ENCODE measurements at regions of chr18 and their contacts with region 1.

Region 1: GRCh38 chr18:35386600-35387351 is 9.6 kb upstream of the ZNF396 start:
- DNase-seq: peak; percentile 14 to 72
- ATAC-seq: peak; percentile 63 to 78 (median 74)
- H3K4me3 ChIP-seq: no peak overlapping the region
- H3K27ac ChIP-seq: no peak overlapping the region
- H3K4me1 ChIP-seq: peaks cover 0 to 10% (median 0%) of the 10 kb centered on the region in 9 donors
- H3K27me3 ChIP-seq: peaks cover 0 to 12% (median 0%) of the 10 kb centered on the region in 7 donors
- CTCF ChIP-seq: peak; percentile 83 to 96 (median 91)

Region 2: DNA sequence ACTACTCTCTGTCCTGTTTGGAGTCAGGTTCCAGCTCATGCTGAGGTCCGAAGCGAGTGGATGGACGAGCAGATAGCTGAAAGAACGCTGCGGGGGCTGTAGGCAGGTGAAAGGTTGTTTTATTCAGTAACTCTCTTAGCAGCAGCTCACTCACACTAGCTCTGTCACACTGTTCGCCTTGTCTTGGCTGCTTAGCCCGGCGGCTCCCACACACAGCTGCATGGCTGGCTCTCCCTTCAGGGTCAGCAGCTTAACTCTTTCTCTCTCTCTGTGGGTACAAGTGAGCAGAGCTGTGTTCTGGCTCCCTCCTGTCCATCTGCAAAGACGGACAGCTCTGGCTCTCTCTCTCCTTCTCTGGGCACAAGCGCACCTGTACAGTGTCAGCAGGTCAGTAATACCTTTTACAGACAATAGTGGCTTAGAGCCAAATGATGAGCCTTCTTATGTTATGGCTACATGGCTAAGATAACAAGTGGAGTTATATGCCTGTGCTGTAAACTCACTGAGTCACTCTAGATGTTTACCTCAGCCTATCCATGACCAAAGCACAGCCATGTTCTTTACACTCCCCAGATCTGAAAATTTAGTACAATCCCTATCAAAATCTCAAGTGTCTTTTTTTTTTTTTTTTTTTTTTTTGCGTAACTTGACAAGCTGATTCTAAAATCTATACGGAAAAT is 344.1 kb after region 1 on chr18:
- intact Hi-C with region 1: loop called in 1 of 10 experiments (anchors 10 kb)
- DNase-seq: peak in 1 of 2 donors; percentile 21
- ATAC-seq: peak in 7 of 8 donors; percentile 48 to 80 (median 60)
- H3K4me3 ChIP-seq: peak overlapping the region in 2 of 10 donors; percentile 12 to 19
- H3K27ac ChIP-seq: peak overlapping the region in 5 of 10 donors; percentile 1 to 87 (median 7)
- H3K4me1 ChIP-seq: peaks cover 0 to 41% (median 11%) of the 10 kb centered on the region in 9 donors
- H3K27me3 ChIP-seq: no peaks in the 10 kb centered on the region
- CTCF ChIP-seq: no peak

Region 3: GRCh38 chr18:35949903-35950627 is 563.3 kb after region 1 on chr18:
- intact Hi-C with region 1: loop called in 8 of 10 experiments (anchors 5 to 10 kb)
- DNase-seq: peak; percentile 45 to 60
- ATAC-seq: peak; percentile 74 to 92 (median 84)
- H3K4me3 ChIP-seq: peak overlapping the region; percentile 26 to 68 (median 62)
- H3K27ac ChIP-seq: no peak overlapping the region
- H3K4me1 ChIP-seq: peaks cover 0 to 9% (median 3%) of the 10 kb centered on the region in 9 donors
- H3K27me3 ChIP-seq: peaks cover 0 to 19% (median 0%) of the 10 kb centered on the region in 7 donors
- CTCF ChIP-seq: peak; percentile 88 to 96 (median 93)

Region 4: DNA sequence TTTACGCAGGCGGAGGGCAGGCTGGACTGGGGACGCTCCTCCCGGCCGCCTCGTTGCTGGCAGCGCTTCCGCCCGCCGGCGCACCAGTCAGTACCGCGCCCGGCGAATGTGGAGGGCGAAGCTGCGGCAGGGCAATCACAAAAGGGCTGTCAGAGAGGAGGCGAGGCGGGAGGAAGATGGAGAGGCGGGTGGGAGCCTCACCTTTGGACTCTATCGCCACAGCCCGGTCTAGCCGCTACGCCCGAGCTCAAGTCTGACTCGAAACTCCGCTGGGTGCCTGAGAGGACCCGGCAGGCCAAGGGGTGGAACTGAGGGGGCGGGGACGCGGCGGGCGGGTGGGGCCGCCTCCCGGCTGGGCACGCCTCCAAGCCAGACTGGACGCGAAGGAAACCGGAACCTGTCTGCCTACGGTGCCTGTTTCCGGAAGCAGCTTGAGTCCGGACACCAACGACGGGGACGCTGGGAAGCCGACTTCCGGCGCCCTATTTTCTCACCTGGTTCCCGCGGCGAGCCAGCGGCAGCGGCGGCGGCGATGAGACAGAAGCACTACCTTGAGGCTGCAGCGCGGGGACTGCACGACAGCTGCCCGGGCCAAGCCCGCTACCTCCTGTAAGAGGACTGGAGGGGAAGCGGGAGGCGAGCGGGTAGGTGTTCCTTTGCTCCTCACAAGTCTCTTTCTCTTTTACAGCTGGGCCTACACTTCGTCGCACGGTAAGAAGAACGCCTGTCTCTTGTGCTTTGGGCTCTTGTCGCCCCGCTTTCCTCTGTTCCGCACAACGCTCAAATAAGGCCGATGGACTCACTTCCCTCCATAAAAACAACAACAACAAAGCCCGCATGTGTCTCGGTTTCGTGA is 585.6 kb after region 1 on chr18 and contains the start of gene RMP24:
- intact Hi-C with region 1: loop called in 1 of 10 experiments (anchors 10 kb)
- DNase-seq: peak; percentile 94 to 95
- ATAC-seq: peak; percentile 96 to 98 (median 98)
- H3K4me3 ChIP-seq: peak within 1 kb of the TSS; percentile 57 to 96 (median 79)
- H3K27ac ChIP-seq: peak within 1 kb of the TSS; percentile 75 to 96 (median 90)
- H3K4me1 ChIP-seq: peaks cover 0 to 36% (median 21%) of the 10 kb centered on the region in 9 donors
- H3K27me3 ChIP-seq: no peaks in the 10 kb centered on the region
- CTCF ChIP-seq: peak in 1 of 9 donors; percentile 8

Measured in heart right ventricle (tissue), 16 donors.